ENCODE measurements at regions of chr1 and their contacts with region 1.

Region 1: DNA sequence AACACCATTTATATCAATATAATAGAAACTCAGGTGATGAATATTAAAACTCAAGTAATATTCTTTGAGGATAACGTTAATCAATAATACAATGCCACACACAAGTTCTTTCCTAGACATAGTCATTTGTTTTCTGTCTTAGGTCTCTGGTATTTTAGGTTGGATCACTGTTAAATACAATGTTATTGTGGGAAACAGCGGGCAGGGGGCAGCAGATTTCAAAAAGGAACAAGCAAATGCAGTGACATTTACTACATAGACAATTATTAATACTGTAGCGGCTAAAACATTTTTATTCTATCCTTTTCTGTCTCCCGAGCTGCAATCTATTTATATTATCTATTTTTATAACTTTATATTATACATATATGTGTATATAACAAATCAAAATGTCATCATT is 186.4 kb upstream of the ZNHIT6 start:
- DNase-seq: peak; percentile 33
- ATAC-seq: peak; percentile 79; the same call in 1 of the 2 replicates
- H3K4me3 ChIP-seq: no peak overlapping the region
- H3K27ac ChIP-seq: no peak overlapping the region
- H3K4me1 ChIP-seq: no peaks in the 10 kb centered on the region
- H3K27me3 ChIP-seq: no peaks in the 10 kb centered on the region
- CTCF ChIP-seq: peak; percentile 75; the same call in 1 of the 2 replicates

Region 2: GRCh38 chr1:85838238-85838637 is 56.4 kb before region 1 on chr1:
- CTCF ChIA-PET with region 1: no interaction called
- POLR2A ChIA-PET with region 1: no interaction called
- in situ Hi-C with region 1: no loop called
- intact Hi-C with region 1: no loop called
- DNase-seq: no peak
- ATAC-seq: no peak
- H3K4me3 ChIP-seq: no peak overlapping the region
- H3K27ac ChIP-seq: no peak overlapping the region
- H3K4me1 ChIP-seq: no peaks in the 10 kb centered on the region
- H3K27me3 ChIP-seq: no peaks in the 10 kb centered on the region
- CTCF ChIP-seq: no peak

Region 3: GRCh38 chr1:86018283-86018923 is 123.8 kb after region 1 on chr1:
- CTCF ChIA-PET with region 1: interaction called, 3 read pairs
- POLR2A ChIA-PET with region 1: no interaction called
- in situ Hi-C with region 1: no loop called
- intact Hi-C with region 1: loop called (anchors 2 kb)
- DNase-seq: peak; percentile 54
- ATAC-seq: peak; percentile 88
- H3K4me3 ChIP-seq: no peak overlapping the region
- H3K27ac ChIP-seq: no peak overlapping the region
- H3K4me1 ChIP-seq: no peaks in the 10 kb centered on the region
- H3K27me3 ChIP-seq: peaks cover 4% of the 10 kb centered on the region; the same call in 1 of the 2 replicates
- CTCF ChIP-seq: peak; percentile 96; the same call in 1 of the 2 replicates

Region 4: DNA sequence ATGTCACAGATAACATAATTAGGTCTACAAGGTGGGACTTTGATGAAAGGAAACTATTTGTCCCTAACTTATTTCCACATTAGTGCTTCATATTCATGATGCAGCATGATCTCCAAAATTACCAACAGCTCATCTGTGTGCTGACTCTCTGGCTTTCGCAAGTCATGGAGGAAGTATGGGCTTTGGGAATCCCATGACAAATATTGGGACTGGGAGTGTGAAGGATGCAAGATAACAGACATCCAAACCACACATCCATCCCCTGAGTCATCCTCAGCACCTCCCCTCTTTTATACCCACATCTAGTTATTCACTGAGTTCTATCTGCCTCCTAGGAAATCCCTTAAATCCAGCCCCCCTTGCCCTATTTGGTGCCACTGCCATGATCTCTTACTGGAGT is 364.7 kb after region 1 on chr1:
- CTCF ChIA-PET with region 1: no interaction called
- POLR2A ChIA-PET with region 1: no interaction called
- in situ Hi-C with region 1: no loop called
- intact Hi-C with region 1: loop called (anchors 10 kb)
- DNase-seq: no peak
- ATAC-seq: no peak
- H3K4me3 ChIP-seq: no peak overlapping the region
- H3K27ac ChIP-seq: no peak overlapping the region
- H3K4me1 ChIP-seq: no peaks in the 10 kb centered on the region
- H3K27me3 ChIP-seq: peaks cover 25% of the 10 kb centered on the region
- CTCF ChIP-seq: no peak